ENCODE measurements at regions of chr7 and their contacts with region 1.

Region 1: GRCh38 chr7:154794110-154794780 is 208.7 kb downstream of the PAXIP1 start:
- DNase-seq: peak; percentile 57 to 78 (median 76)
- ATAC-seq: peak; percentile 97
- H3K4me3 ChIP-seq: no peak overlapping the region
- H3K27ac ChIP-seq: no peak overlapping the region
- H3K4me1 ChIP-seq: peaks cover 0 to 9% of the 10 kb centered on the region in 2 experiments; a peak in 2 of 5 replicates
- H3K27me3 ChIP-seq: peaks cover 55 to 64% of the 10 kb centered on the region in 2 experiments
- CTCF ChIP-seq: peak; percentile 73 to 89 (median 74)
- EP300 ChIP-seq: no peak
- POLR2A ChIP-seq: no peak
- RAD21 ChIP-seq: peak in 1 of 2 experiments; percentile 58; a peak in 2 of 4 replicates

Region 2: DNA sequence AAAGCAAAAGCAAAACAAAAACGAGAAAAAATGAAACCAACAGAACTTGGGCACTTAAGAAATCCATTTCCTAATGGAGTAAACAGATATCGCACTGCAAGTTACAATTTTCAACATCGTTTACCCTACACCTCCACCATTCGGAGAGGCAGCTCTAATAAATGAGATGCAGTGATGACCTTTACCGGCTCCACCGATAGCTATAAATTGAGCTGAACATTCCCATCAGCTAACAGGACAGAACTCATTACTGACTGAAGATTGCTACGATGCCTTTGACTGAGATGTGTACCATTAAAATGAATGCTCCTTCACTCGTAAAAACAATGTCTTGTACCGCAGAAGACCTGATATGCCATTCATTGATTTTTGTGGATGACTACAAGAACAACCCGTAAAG is 276.5 kb before region 1 on chr7:
- CTCF ChIA-PET with region 1: no interaction called
- POLR2A ChIA-PET with region 1: no interaction called
- in situ Hi-C with region 1: no loop called
- intact Hi-C with region 1: loop called (anchors 10 kb)
- DNase-seq: no peak
- ATAC-seq: no peak
- H3K4me3 ChIP-seq: no peak overlapping the region
- H3K27ac ChIP-seq: no peak overlapping the region
- H3K4me1 ChIP-seq: no peaks in the 10 kb centered on the region
- H3K27me3 ChIP-seq: peaks cover 16 to 18% of the 10 kb centered on the region in 2 experiments
- CTCF ChIP-seq: no peak
- EP300 ChIP-seq: no peak
- POLR2A ChIP-seq: no peak
- RAD21 ChIP-seq: no peak

Region 3: GRCh38 chr7:154640266-154640865 is 153.9 kb before region 1 on chr7:
- CTCF ChIA-PET with region 1: interaction called, 3 read pairs
- POLR2A ChIA-PET with region 1: no interaction called
- in situ Hi-C with region 1: no loop called
- intact Hi-C with region 1: loop called (anchors 1 kb)
- DNase-seq: peak; percentile 74 to 79 (median 76)
- ATAC-seq: peak; percentile 99
- H3K4me3 ChIP-seq: no peak overlapping the region
- H3K27ac ChIP-seq: no peak overlapping the region
- H3K4me1 ChIP-seq: no peaks in the 10 kb centered on the region
- H3K27me3 ChIP-seq: peaks cover 25 to 31% of the 10 kb centered on the region in 2 experiments
- CTCF ChIP-seq: peak; percentile 90 to 98 (median 94)
- EP300 ChIP-seq: no peak
- POLR2A ChIP-seq: no peak
- RAD21 ChIP-seq: peak; percentile 96 to 97

Region 4: DNA sequence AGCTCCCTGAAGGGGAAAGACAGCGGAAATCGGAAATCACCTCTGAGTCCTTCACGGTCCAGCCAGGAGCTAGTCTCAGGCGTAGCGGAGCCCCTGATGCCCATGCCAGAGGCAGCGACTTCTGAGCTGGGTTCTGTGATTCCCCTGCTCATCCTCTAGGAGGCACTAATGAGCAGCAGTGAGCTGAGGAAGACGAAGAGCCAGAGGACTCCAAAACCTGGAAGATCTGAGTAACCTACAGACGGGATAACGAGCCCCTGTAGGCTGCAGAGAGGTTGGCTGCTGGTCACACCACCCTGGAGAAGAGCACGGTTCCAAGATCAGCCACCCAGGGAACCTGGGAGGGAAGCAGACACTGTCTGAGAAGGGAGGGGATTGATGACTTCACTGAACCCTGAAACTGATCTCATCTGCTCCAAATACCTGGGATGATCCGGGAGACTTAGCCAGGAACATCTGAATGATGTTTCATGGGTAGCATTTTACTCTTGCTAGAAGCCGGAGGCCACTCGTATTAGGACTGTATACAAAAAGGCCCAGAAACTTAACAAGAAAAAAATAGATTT is 95.4 kb before region 1 on chr7:
- CTCF ChIA-PET with region 1: no interaction called
- POLR2A ChIA-PET with region 1: no interaction called
- in situ Hi-C with region 1: no loop called
- intact Hi-C with region 1: loop called (anchors 1 kb)
- DNase-seq: peak; percentile 71 to 84 (median 79)
- ATAC-seq: peak; percentile 83
- H3K4me3 ChIP-seq: no peak overlapping the region
- H3K27ac ChIP-seq: no peak overlapping the region
- H3K4me1 ChIP-seq: peaks cover 3 to 5% of the 10 kb centered on the region in 2 experiments; a peak in 2 of 5 replicates
- H3K27me3 ChIP-seq: peaks cover 0 to 27% of the 10 kb centered on the region in 2 experiments; a peak in 3 of 5 replicates
- CTCF ChIP-seq: peak; percentile 86 to 98 (median 89)
- EP300 ChIP-seq: no peak
- POLR2A ChIP-seq: no peak
- RAD21 ChIP-seq: peak; percentile 35 to 45

Region 5: DNA sequence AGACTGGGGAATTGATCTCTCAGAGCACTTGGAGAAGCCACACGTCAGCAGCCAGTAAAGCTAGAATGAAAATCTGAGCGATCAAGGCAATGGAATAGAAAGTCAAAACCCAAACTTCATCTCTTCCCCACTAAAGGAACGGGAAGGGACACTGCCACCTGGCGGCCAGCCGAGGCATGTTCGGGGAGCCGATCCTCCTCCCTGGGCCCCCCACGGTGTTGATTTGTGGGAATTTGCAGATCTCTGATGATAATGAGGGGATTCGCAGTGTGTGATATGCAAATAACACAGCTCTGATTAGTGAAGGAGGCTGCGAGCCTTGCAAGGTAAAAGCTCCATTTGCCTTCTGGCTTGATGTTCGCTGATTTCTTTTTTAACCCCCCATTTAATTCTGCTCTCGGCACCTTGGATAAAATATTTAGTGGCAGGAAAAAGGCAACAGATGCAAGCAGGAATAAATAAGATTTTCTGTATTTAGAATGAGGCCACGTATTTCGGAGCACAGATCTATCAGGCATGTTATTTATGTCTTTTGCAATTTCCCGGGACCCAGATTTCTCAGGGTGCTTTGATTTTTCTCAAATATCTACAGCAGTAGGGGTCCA is 49.9 kb before region 1 on chr7:
- CTCF ChIA-PET with region 1: no interaction called
- POLR2A ChIA-PET with region 1: no interaction called
- in situ Hi-C with region 1: no loop called
- intact Hi-C with region 1: loop called (anchors 2 kb)
- DNase-seq: peak; percentile 75 to 94 (median 92)
- ATAC-seq: peak; percentile 96
- H3K4me3 ChIP-seq: no peak overlapping the region
- H3K27ac ChIP-seq: no peak overlapping the region
- H3K4me1 ChIP-seq: no peaks in the 10 kb centered on the region
- H3K27me3 ChIP-seq: peaks cover 40 to 65% of the 10 kb centered on the region in 2 experiments
- CTCF ChIP-seq: peak; percentile 93 to 98 (median 94)
- EP300 ChIP-seq: no peak
- POLR2A ChIP-seq: no peak
- RAD21 ChIP-seq: peak; percentile 92 to 95